Psoas muscle (tissue), 8 donors: ENCODE measurements at regions of chr9 and their contacts with region 1.

Region 1: GRCh38 chr9:15155826-15156225 is 151.2 kb downstream of the TTC39B start:
- DNase-seq: no peak
- ATAC-seq: peak in 1 of 4 donors; percentile 32
- H3K4me3 ChIP-seq: no peak overlapping the region
- H3K27ac ChIP-seq: peak overlapping the region; percentile 57
- H3K4me1 ChIP-seq: peaks cover 5% of the 10 kb centered on the region
- H3K27me3 ChIP-seq: no peaks in the 10 kb centered on the region
- CTCF ChIP-seq: no peak

Region 2: DNA sequence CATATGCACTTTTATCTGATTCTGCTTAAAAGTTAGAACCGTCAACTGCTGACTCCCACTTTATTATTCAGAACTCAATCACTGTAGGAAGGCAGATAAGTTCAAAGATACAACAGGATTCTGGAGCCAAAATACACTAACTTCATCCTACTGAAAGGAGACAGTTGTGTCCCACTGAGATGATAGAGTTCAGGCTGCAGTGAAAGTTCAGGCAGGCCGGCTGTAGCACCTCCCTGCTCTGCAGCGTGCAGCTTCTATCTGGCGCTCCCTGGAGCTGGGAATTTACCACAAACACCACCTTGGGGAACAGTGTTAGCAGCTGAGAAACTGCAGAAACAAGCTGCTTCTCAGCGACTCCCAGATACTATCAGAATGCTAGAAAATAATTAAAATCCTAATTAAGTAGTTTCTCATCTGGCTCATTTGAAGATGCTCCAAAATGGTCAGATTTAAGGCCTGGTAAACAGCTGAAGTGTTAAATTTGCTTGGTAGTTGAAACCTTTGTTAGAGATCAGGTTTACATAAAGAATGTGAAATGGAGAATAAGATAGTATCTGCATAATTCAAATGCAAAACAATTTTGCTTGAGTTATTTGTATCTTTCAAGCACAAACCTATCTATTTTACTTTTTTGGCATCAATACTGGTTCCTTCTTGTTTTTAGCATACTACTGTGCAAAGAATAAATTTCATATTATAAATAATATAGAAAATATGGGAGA is 1926.7 kb after region 1 on chr9:
- intact Hi-C with region 1: loop called in 1 of 2 experiments (anchors 5 kb)
- DNase-seq: no peak
- ATAC-seq: no peak
- H3K4me3 ChIP-seq: no peak overlapping the region
- H3K27ac ChIP-seq: no peak overlapping the region
- H3K4me1 ChIP-seq: no peaks in the 10 kb centered on the region
- H3K27me3 ChIP-seq: no peaks in the 10 kb centered on the region
- CTCF ChIP-seq: no peak